Calu3 (cell line): ENCODE measurements at regions of chr2 and their contacts with region 1.

Region 1: DNA sequence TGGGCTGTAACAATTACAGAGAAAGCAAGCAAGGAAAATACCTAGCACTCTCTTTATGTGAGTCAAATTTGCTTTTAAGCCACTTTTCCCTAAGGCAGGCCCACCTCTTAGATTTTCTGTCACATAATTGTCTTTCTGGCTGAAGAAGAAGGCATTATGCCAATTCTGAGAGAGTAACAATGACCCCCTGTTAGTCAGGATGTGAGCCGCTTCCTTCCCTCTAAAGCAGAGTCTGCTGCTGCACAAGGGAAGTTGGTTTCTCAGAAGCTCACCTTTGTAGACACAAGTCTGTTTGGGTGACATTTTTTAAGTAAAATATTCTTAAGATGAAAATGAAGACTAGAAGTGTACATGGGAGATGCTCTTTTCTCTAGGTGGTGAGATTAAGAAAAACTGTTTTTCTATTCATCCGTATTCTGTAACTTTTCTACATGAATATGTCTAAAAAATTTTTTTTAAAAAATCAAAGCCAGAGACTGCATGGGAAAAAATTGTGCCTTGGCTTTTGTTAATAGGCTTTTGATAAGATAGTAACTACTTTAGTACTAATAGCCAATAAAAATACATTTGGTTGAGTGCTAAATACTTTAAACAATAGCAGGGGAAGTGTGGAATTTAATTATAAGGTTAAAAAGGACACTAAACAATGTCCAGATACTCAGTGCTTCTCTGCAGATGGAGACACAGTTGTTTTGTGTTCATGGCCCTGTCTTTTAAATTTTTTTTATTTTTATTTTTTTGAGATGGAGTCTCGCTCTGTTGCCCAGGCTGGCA is 33.4 kb upstream of the VPS54 start:
- DNase-seq: no peak
- H3K4me3 Mint-ChIP-seq: no peak overlapping the region
- H3K27ac Mint-ChIP-seq: no peak overlapping the region
- H3K4me1 Mint-ChIP-seq: peaks cover 8% of the 10 kb centered on the region
- H3K27me3 Mint-ChIP-seq: no peaks in the 10 kb centered on the region
- CTCF ChIP-seq: no peak

Region 2: GRCh38 chr2:63903003-63903402 is 149.7 kb before region 1 on chr2:
- CTCF ChIA-PET with region 1: no interaction called
- intact Hi-C with region 1: no loop called
- DNase-seq: no peak
- H3K4me3 Mint-ChIP-seq: no peak overlapping the region
- H3K27ac Mint-ChIP-seq: no peak overlapping the region
- H3K4me1 Mint-ChIP-seq: no peaks in the 10 kb centered on the region
- H3K27me3 Mint-ChIP-seq: no peaks in the 10 kb centered on the region
- CTCF ChIP-seq: no peak

Region 3: GRCh38 chr2:64214281-64215115 is 161.8 kb after region 1 on chr2:
- CTCF ChIA-PET with region 1: no interaction called
- intact Hi-C with region 1: loop called (anchors 10 kb)
- DNase-seq: no peak
- H3K4me3 Mint-ChIP-seq: no peak overlapping the region
- H3K27ac Mint-ChIP-seq: no peak overlapping the region
- H3K4me1 Mint-ChIP-seq: peaks cover 17% of the 10 kb centered on the region
- H3K27me3 Mint-ChIP-seq: no peaks in the 10 kb centered on the region
- CTCF ChIP-seq: no peak

Region 4: DNA sequence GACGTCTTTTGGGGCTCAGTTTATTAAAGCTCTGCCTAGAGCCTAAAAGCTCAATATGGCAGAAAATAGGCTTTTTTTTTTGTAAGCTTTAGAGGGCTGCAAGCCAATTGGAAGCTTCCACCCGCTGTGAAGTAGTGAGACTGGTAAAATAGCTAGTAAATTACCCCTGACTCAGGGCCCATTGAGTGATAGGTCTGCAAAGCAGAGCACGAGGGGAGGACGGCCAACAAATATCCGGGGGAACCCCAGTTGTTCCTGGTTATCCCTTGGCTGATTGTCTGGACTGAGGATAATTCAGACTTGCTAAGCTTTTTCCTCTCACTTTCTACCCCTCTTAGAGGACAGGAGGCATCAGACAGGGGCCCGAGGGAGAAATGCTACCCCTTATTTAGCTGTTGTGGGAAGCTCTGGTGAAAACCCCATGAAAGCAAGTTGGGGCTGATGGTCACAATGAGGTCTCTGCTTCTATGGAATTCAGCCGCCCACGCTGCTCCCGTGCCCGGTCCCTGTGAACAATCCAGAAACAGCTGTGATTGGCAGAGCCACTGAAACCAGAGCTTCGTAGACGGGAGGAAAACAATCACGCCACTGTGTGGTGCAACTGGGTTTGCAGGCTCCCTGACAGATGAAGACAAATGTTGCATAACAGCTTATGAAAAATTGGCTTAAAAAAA is 259.4 kb after region 1 on chr2:
- CTCF ChIA-PET with region 1: interaction called, 16 read pairs
- intact Hi-C with region 1: loop called (anchors 1 kb)
- DNase-seq: peak; percentile 79
- H3K4me3 Mint-ChIP-seq: peak overlapping the region; percentile 40
- H3K27ac Mint-ChIP-seq: peak overlapping the region; percentile 27
- H3K4me1 Mint-ChIP-seq: peaks cover 21% of the 10 kb centered on the region
- H3K27me3 Mint-ChIP-seq: peaks cover 13% of the 10 kb centered on the region
- CTCF ChIP-seq: peak; percentile 35

Region 5: DNA sequence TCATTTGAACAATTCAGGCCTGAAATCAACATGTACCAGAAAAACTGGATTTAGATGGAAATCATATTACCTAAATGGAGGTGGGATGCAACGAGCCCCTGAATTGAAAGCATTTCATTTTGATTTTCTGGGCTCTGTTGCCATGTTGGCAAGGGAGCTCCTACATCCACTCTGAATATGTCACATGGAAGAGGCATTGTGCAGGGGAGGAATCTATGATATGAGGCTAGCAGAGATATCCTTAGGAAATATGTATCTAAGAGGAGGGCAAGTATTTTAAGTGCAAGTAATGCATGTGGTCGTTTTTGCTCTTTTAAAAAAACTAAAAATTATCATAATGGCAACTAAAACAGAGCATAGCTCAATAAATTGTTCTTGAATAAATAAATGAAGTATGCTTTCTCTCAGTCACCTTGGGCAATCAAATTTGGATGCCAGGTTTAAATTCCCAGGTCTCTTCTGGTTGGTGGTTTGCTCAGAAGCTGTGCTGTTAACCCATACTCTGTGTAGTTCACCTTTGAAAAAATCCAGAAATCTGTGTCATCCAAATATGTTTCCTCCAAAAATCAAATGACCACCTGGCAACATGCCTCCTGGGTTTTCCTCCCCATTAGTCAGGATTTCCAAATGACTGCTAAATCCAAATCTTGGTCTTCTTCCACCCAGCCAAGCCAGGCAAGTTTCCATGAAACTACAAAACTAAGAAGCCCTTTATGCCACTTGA is 394.8 kb after region 1 on chr2:
- CTCF ChIA-PET with region 1: no interaction called
- intact Hi-C with region 1: no loop called
- DNase-seq: no peak
- H3K4me3 Mint-ChIP-seq: no peak overlapping the region
- H3K27ac Mint-ChIP-seq: no peak overlapping the region
- H3K4me1 Mint-ChIP-seq: no peaks in the 10 kb centered on the region
- H3K27me3 Mint-ChIP-seq: no peaks in the 10 kb centered on the region
- CTCF ChIP-seq: no peak